ENCODE measurements at regions of chr17 and their contacts with region 1.

Region 1: GRCh38 chr17:44775136-44775837 is 16.5 kb downstream of the ADAM11 start:
- ATAC-seq: peak; percentile 83 to 92 (median 88)
- H3K4me3 ChIP-seq: peak overlapping the region; percentile 34 to 55 (median 44)
- H3K27ac ChIP-seq: peak overlapping the region; percentile 1 to 41
- H3K4me1 ChIP-seq: peaks cover 10 to 19% of the 10 kb centered on the region in 2 donors

Region 2: DNA sequence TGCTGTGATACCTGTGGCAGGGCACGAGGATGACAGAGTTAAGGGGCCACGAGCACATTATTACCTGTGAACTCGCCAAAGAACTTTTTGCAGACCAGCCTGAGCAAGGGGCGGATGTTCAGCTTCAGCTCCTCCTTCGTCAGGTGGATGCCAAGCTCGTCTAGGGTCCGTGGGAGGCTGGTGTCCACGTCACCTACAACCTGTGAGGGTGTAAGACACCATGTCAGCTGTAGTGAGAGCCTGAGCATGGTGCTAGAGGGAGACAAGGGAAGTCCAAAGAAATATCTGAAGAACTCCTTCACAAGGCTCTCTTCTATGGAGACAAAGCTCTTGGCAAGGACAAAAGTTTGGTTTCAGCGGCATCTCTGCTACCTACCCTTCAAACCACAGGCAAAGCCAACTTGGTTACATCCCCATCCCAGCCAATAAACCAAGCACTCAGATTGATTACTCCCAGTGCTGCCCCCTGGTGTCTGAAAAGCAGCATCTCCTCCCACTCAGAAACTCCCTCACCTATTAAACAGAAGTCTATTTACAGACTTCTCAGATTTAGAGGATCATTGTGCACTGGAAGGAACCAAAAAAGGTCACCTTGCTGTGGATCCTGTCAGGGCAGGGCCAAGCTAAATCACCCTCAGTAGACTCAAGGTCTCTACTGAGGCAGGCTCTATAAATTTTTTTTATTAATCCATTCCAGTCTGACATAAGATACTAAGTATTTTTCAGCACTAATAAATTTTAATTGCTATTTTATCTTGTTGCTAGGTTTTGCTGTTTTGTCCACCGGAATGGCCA is 89.8 kb after region 1 on chr17:
- in situ Hi-C with region 1: loop called in 4 of 9 experiments (anchors 10 to 25 kb)
- ATAC-seq: peak; percentile 63 to 90 (median 81)
- H3K4me3 ChIP-seq: no peak overlapping the region
- H3K27ac ChIP-seq: no peak overlapping the region
- H3K4me1 ChIP-seq: no peaks in the 10 kb centered on the region

Measured in motor neuron (in vitro differentiated cells).